Calu3 (cell line): ENCODE measurements at regions of chr2 and their contacts with region 1.

Region 1: DNA sequence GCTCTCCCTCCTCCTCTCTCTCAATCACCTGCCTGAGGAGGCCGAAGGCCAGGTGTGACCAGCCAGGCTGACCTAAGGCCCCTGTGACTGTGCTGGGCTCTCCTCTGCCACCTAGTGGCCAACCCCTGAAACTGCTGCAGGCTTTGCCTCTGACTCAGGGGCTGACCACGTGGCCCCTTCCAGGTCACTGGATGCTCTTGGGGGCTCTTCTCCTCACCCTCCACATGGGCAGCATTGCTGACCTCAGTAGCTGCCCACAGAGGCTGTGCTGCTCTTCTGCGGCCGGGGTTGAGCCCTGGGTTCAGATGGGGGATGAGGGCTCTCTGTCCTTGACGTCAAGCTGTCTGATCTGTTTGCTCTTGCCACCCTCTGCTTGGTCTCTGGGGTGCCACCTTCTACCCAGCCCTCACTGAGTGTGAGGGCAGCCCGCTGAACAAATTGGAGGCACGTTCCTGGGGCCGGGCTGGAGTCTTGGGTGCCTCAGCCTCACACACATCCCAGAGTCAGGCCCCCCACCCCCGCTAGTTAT is 122.7 kb downstream of the TWIST2 start:
- DNase-seq: peak; percentile 80
- H3K4me3 Mint-ChIP-seq: no peak overlapping the region
- H3K27ac Mint-ChIP-seq: no peak overlapping the region
- H3K4me1 Mint-ChIP-seq: no peaks in the 10 kb centered on the region
- H3K27me3 Mint-ChIP-seq: peaks cover 58% of the 10 kb centered on the region
- CTCF ChIP-seq: peak; percentile 99

Region 2: GRCh38 chr2:238720232-238720672 is 250.4 kb before region 1 on chr2:
- CTCF ChIA-PET with region 1: no interaction called
- intact Hi-C with region 1: loop called (anchors 2 kb)
- DNase-seq: peak; percentile 77
- H3K4me3 Mint-ChIP-seq: no peak overlapping the region
- H3K27ac Mint-ChIP-seq: no peak overlapping the region
- H3K4me1 Mint-ChIP-seq: no peaks in the 10 kb centered on the region
- H3K27me3 Mint-ChIP-seq: peaks cover 32% of the 10 kb centered on the region
- CTCF ChIP-seq: peak; percentile 81